AG04449 (cell line): ENCODE measurements at regions of chr3 and their contacts with region 1.

Region 1: GRCh38 chr3:37210230-37210629 is 35.8 kb upstream of the LRRFIP2 start:
- DNase-seq: peak; percentile 57
- H3K4me3 ChIP-seq: no peak overlapping the region
- CTCF ChIP-seq: no peak

Region 2: GRCh38 chr3:37024092-37024491 is 186.1 kb before region 1 on chr3:
- CTCF ChIA-PET with region 1: interaction called, 92 read pairs
- POLR2A ChIA-PET with region 1: no interaction called
- DNase-seq: no peak
- H3K4me3 ChIP-seq: no peak overlapping the region
- CTCF ChIP-seq: peak; percentile 17

Region 3: DNA sequence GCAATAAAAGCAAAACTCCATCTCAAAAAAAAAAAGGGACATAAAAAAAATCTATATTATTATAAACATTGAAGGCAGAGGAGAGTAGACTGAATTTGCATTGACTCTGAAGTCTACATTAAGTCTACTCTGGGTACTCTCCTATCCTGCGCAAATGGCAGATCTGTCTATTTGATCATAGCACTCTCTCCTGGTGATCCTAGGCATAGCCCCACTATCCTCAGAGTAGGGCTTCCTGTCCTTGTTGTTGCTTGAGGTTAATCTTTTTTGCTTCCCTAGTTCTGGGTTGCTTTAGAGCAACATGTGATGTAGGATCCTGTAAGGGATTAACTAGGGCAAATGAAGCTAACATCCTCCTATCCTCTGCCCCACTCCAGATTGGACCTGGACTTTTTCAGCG is 46.2 kb after region 1 on chr3:
- CTCF ChIA-PET with region 1: no interaction called
- POLR2A ChIA-PET with region 1: no interaction called
- DNase-seq: no peak
- H3K4me3 ChIP-seq: no peak overlapping the region
- CTCF ChIP-seq: no peak